Breast epithelium (tissue), 4 donors: ENCODE measurements at regions of chr2 and their contacts with region 1.

Region 1: GRCh38 chr2:37188570-37188969 is at the start of gene SULT6B1:
- DNase-seq: no peak
- H3K4me3 ChIP-seq: no peak within 1 kb of the TSS
- H3K27ac ChIP-seq: peak within 1 kb of the TSS in 1 of 2 donors; percentile 61
- H3K4me1 ChIP-seq: no peaks in the 10 kb centered on the region
- H3K27me3 ChIP-seq: no peaks in the 10 kb centered on the region
- CTCF ChIP-seq: no peak
- POLR2A ChIP-seq: no peak
- total RNA-seq, gene SULT6B1: not detected

Region 2: GRCh38 chr2:36966370-36967235 is 222.0 kb before region 1 on chr2 and contains the start of gene STRN:
- intact Hi-C with region 1: no loop called
- DNase-seq: peak; percentile 93 to 96
- H3K4me3 ChIP-seq: peak within 1 kb of the TSS; percentile 76 to 98 (median 90)
- H3K27ac ChIP-seq: peak within 1 kb of the TSS; percentile 94 to 95
- H3K4me1 ChIP-seq: peaks cover 0 to 12% of the 10 kb centered on the region in 2 donors
- H3K27me3 ChIP-seq: no peaks in the 10 kb centered on the region
- CTCF ChIP-seq: no peak
- POLR2A ChIP-seq: no peak
- total RNA-seq, gene STRN: 27.2 to 35.1 (median 32.5) TPM

Region 3: GRCh38 chr2:37215250-37215649 is 26.7 kb after region 1 on chr2:
- intact Hi-C with region 1: loop called (anchors 1 kb)
- DNase-seq: no peak
- H3K4me3 ChIP-seq: no peak overlapping the region
- H3K27ac ChIP-seq: no peak overlapping the region
- H3K4me1 ChIP-seq: no peaks in the 10 kb centered on the region
- H3K27me3 ChIP-seq: no peaks in the 10 kb centered on the region
- CTCF ChIP-seq: no peak
- POLR2A ChIP-seq: no peak